Activated CD4-positive, alpha-beta memory T cell treated with anti-CD3 and anti-CD28 coated beads for 36 hours (primary cell): ENCODE measurements at regions of chr21 and their contacts with region 1.

Region 1: GRCh38 chr21:14454016-14455009 is 71.4 kb upstream of the HSPA13 start:
- DNase-seq: no peak
- H3K4me3 Mint-ChIP-seq: no peak overlapping the region
- H3K27ac Mint-ChIP-seq: peak overlapping the region; percentile 74
- H3K4me1 Mint-ChIP-seq: peaks cover 42% of the 10 kb centered on the region
- H3K27me3 Mint-ChIP-seq: no peaks in the 10 kb centered on the region

Region 2: DNA sequence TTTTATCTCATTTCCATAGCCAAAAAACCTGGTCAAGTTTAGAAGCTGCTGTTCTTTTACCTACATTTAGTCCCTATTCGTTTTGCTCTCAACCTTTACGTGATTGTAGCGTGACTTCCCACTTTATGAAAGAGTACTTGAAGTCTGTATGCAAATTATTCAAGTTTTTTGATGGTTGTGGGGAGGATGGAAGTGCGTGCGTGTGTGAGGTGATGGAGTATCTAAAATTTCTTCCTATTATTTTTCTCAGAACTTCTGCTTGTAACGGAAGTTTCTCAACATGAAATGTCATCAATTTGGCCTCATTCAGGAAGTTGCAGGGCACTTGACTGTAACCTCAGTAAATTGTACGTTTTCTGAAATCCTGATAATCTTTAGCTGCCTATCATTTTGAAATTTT is 27.9 kb after region 1 on chr21:
- CTCF ChIA-PET with region 1: no interaction called
- POLR2A ChIA-PET with region 1: interaction called, 3 read pairs
- intact Hi-C with region 1: loop called (anchors 1 kb)
- DNase-seq: peak; percentile 28
- H3K4me3 Mint-ChIP-seq: peak overlapping the region; percentile 27
- H3K27ac Mint-ChIP-seq: peak overlapping the region; percentile 92
- H3K4me1 Mint-ChIP-seq: peaks cover 44% of the 10 kb centered on the region
- H3K27me3 Mint-ChIP-seq: no peaks in the 10 kb centered on the region

Region 3: DNA sequence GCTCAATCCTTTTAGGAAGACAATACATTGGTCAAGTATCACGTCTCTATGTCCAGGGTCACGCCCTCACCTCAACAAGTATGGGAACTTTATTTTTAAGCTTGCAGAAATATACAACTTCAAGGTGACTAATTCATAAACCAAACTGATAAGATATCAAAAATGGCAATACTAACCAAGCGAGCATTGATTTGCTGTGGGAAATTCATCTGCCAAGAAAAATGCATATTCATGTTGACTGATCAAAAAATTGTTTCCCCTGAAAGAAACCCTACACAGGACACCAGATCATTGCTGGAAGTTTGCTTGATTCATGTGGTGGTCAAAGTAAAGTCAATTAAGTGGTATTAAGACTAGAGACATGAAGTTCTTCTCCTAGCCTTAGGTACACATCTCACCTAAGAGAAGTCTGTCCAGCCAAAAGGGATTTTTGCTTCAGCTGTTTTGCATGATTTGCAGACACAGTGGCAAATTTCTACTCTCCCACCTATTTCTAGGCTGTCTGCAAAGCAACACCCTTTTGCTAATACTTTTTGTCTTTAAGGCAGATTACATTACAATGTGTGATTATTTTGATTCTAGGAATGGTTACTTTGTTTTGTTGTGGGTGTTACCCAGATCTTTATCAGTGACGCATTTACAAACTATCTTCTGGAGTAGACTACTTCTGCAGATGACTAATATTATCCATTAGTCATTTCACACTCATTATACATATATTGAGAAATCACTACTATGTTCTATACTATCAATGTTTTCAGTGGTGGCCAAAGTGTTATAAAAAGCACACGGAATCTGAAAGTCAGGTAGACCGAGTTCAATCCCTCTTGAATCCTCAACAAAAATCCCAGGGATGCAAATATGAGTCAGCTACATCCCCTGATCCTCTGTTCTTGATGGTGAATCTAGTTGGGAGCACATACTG is 79.5 kb after region 1 on chr21:
- CTCF ChIA-PET with region 1: no interaction called
- POLR2A ChIA-PET with region 1: interaction called, 9 read pairs
- intact Hi-C with region 1: loop called (anchors 1 kb)
- DNase-seq: peak; percentile 29
- H3K4me3 Mint-ChIP-seq: peak overlapping the region; percentile 95
- H3K27ac Mint-ChIP-seq: peak overlapping the region; percentile 100
- H3K4me1 Mint-ChIP-seq: peaks cover 82% of the 10 kb centered on the region
- H3K27me3 Mint-ChIP-seq: peaks cover 2% of the 10 kb centered on the region

Region 4: GRCh38 chr21:14559102-14559501 is 104.8 kb after region 1 on chr21:
- CTCF ChIA-PET with region 1: no interaction called
- POLR2A ChIA-PET with region 1: no interaction called
- intact Hi-C with region 1: no loop called
- DNase-seq: no peak
- H3K4me3 Mint-ChIP-seq: no peak overlapping the region
- H3K27ac Mint-ChIP-seq: no peak overlapping the region
- H3K4me1 Mint-ChIP-seq: peaks cover 32% of the 10 kb centered on the region
- H3K27me3 Mint-ChIP-seq: no peaks in the 10 kb centered on the region

Region 5: GRCh38 chr21:14737922-14738321 is 283.6 kb after region 1 on chr21:
- CTCF ChIA-PET with region 1: interaction called, 8 read pairs
- POLR2A ChIA-PET with region 1: no interaction called
- intact Hi-C with region 1: loop called (anchors 2 kb)
- DNase-seq: peak; percentile 38
- H3K4me3 Mint-ChIP-seq: no peak overlapping the region
- H3K27ac Mint-ChIP-seq: no peak overlapping the region
- H3K4me1 Mint-ChIP-seq: peaks cover 31% of the 10 kb centered on the region
- H3K27me3 Mint-ChIP-seq: no peaks in the 10 kb centered on the region